BJ (cell line): ENCODE measurements at regions of chr2 and their contacts with region 1.

Region 1: DNA sequence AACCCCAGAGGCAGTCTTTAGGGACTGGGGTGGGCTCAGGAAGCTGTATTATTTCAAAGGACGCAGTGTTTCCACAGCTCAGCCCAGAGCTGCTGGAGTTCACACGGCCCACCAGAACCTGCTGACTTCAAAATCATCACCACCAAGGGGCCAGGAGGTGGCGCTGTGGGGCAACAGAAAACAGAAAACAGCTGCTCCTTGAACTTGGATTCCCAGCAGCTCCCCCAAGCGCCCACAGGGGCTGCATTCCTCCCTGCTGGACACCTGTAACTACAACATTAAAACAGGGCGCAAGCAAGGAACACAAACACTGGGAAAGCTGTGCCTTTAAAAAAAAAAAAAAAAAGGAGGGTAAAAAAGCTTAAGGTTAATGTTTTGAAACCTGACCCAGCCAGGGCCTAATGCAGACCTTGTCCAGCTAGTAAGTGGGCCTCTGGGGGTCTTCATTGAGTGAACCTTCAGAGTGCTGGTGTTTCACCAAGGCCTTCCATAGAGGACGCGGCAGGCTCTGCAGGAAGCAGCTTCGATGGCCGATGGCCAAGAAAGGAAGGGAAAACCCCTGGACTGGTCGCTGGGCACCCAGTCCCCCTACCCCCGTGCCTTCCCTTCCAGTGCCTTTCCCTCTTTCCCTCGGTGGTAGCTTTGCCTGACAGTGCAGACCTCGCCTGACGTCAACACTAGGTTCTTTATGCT is 25.9 kb downstream of the MLPH start:
- DNase-seq: peak; percentile 32
- H3K4me3 ChIP-seq: no peak overlapping the region
- H3K27me3 ChIP-seq: no peaks in the 10 kb centered on the region
- CTCF ChIP-seq: peak; percentile 87

Region 2: DNA sequence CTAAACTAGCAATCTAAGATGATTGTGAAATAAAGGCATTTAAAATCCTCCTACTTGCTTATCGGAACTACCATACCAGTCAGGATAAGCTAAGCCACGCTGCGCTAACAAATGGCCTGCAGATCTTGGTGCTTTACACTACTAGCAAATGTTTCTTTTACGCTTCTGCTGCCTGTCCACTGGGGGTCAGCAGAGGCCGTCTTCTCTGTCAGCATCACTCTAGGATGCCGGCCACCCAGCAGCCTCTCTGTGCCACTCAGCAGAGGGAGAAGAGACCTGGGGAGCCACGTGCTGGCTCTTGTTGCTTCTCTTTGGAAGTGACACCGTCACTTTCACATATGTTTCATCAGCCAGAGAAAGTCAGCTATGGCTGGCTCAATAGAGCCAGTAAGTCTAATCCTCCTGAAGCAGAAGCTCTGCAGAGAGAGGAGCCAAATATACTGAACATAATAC is 390.7 kb before region 1 on chr2:
- CTCF ChIA-PET with region 1: interaction called, 18 read pairs
- POLR2A ChIA-PET with region 1: no interaction called
- DNase-seq: no peak
- H3K4me3 ChIP-seq: no peak overlapping the region
- H3K27me3 ChIP-seq: no peaks in the 10 kb centered on the region
- CTCF ChIP-seq: peak; percentile 84

Region 3: GRCh38 chr2:237293978-237294377 is 218.9 kb before region 1 on chr2:
- CTCF ChIA-PET with region 1: no interaction called
- POLR2A ChIA-PET with region 1: no interaction called
- DNase-seq: no peak
- H3K4me3 ChIP-seq: no peak overlapping the region
- H3K27me3 ChIP-seq: no peaks in the 10 kb centered on the region
- CTCF ChIP-seq: no peak

Region 4: GRCh38 chr2:237483040-237483721 is 29.7 kb before region 1 on chr2:
- CTCF ChIA-PET with region 1: interaction called, 10 read pairs
- POLR2A ChIA-PET with region 1: interaction called, 3 read pairs
- DNase-seq: no peak
- H3K4me3 ChIP-seq: no peak overlapping the region
- H3K27me3 ChIP-seq: no peaks in the 10 kb centered on the region
- CTCF ChIP-seq: no peak

Region 5: GRCh38 chr2:237524631-237525030 is 11.7 kb after region 1 on chr2:
- CTCF ChIA-PET with region 1: interaction called, 23 read pairs
- POLR2A ChIA-PET with region 1: no interaction called
- DNase-seq: no peak
- H3K4me3 ChIP-seq: no peak overlapping the region
- H3K27me3 ChIP-seq: no peaks in the 10 kb centered on the region
- CTCF ChIP-seq: no peak

Region 6: GRCh38 chr2:237558906-237559641 is 46.2 kb after region 1 on chr2:
- CTCF ChIA-PET with region 1: interaction called, 24 read pairs
- POLR2A ChIA-PET with region 1: no interaction called
- DNase-seq: peak; percentile 74
- H3K4me3 ChIP-seq: no peak overlapping the region
- H3K27me3 ChIP-seq: no peaks in the 10 kb centered on the region; the same call in 1 of the 2 replicates
- CTCF ChIP-seq: peak; percentile 32

Region 7: GRCh38 chr2:237879058-237879430 is 366.1 kb after region 1 on chr2:
- CTCF ChIA-PET with region 1: no interaction called
- POLR2A ChIA-PET with region 1: no interaction called
- DNase-seq: no peak
- H3K4me3 ChIP-seq: no peak overlapping the region
- H3K27me3 ChIP-seq: no peaks in the 10 kb centered on the region
- CTCF ChIP-seq: no peak